ENCODE measurements at regions of chr17 and their contacts with region 1.

Region 1: GRCh38 chr17:52106638-52107261 is 51.8 kb downstream of the CA10 start:
- DNase-seq: peak in 1 of 2 experiments; percentile 13
- H3K4me3 ChIP-seq: no peak overlapping the region
- H3K27ac ChIP-seq: no peak overlapping the region
- H3K4me1 ChIP-seq: no peaks in the 10 kb centered on the region
- H3K27me3 ChIP-seq: no peaks in the 10 kb centered on the region
- CTCF ChIP-seq: peak; percentile 91

Region 2: GRCh38 chr17:51298508-51299371 is 808.0 kb before region 1 on chr17:
- CTCF ChIA-PET with region 1: no interaction called
- POLR2A ChIA-PET with region 1: no interaction called
- intact Hi-C with region 1: loop called (anchors 2 kb)
- DNase-seq: no peak
- H3K4me3 ChIP-seq: no peak overlapping the region
- H3K27ac ChIP-seq: no peak overlapping the region
- H3K4me1 ChIP-seq: no peaks in the 10 kb centered on the region
- H3K27me3 ChIP-seq: no peaks in the 10 kb centered on the region
- CTCF ChIP-seq: peak; percentile 80

Region 3: GRCh38 chr17:51371732-51372151 is 735.0 kb before region 1 on chr17:
- CTCF ChIA-PET with region 1: no interaction called
- POLR2A ChIA-PET with region 1: no interaction called
- intact Hi-C with region 1: loop called (anchors 10 kb)
- DNase-seq: peak in 1 of 2 experiments; percentile 6
- H3K4me3 ChIP-seq: no peak overlapping the region
- H3K27ac ChIP-seq: no peak overlapping the region
- H3K4me1 ChIP-seq: no peaks in the 10 kb centered on the region
- H3K27me3 ChIP-seq: peaks cover 58% of the 10 kb centered on the region
- CTCF ChIP-seq: peak; percentile 67

Region 4: DNA sequence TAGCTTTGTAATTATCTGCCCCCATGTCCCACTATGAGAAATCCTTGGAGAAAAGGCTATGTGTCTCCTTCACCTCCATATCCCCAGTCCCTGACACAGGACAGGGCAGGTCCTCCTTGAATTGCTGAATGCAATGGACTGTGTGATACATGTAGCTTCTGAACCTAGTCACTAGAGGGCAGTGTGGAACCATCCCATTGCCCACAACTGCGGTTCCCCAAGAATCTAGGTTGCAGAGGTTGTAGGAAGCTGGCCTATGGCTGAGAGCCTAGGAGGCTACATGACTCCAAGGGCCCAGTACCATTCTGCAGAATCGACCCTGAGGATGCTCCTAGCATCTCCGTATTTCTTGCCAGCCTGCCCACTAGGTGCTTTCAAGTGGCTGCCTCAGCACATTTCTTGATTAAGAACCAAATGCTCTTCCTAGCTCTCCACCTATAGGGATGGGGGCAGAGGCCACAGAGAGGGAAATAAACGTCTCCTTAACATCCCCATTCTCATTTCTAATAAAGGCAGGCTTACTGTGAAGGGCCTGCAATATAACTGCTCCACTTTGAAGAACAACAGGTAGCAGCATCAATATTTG is 342.3 kb before region 1 on chr17:
- CTCF ChIA-PET with region 1: interaction called, 3 read pairs
- POLR2A ChIA-PET with region 1: no interaction called
- intact Hi-C with region 1: loop called (anchors 1 kb)
- DNase-seq: peak; percentile 32 to 55
- H3K4me3 ChIP-seq: no peak overlapping the region
- H3K27ac ChIP-seq: no peak overlapping the region
- H3K4me1 ChIP-seq: no peaks in the 10 kb centered on the region
- H3K27me3 ChIP-seq: no peaks in the 10 kb centered on the region; the same call in 1 of the 2 replicates
- CTCF ChIP-seq: peak; percentile 92

Region 5: GRCh38 chr17:52120465-52120864 is 13.7 kb after region 1 on chr17:
- CTCF ChIA-PET with region 1: no interaction called
- POLR2A ChIA-PET with region 1: no interaction called
- intact Hi-C with region 1: no loop called
- DNase-seq: no peak
- H3K4me3 ChIP-seq: no peak overlapping the region
- H3K27ac ChIP-seq: no peak overlapping the region
- H3K4me1 ChIP-seq: no peaks in the 10 kb centered on the region
- H3K27me3 ChIP-seq: no peaks in the 10 kb centered on the region
- CTCF ChIP-seq: no peak